PC-9 (cell line): ENCODE measurements at regions of chr14 and their contacts with region 1.

Region 1: GRCh38 chr14:93231129-93231979 is 24.3 kb downstream of the UBR7 start:
- DNase-seq: no peak
- H3K4me3 ChIP-seq: no peak overlapping the region
- H3K27ac ChIP-seq: no peak overlapping the region
- H3K4me1 ChIP-seq: no peaks in the 10 kb centered on the region
- H3K27me3 ChIP-seq: no peaks in the 10 kb centered on the region
- CTCF ChIP-seq: no peak

Region 2: GRCh38 chr14:92748259-92749016 is 482.9 kb before region 1 on chr14 and contains the start of gene LGMN:
- CTCF ChIA-PET with region 1: no interaction called
- POLR2A ChIA-PET with region 1: interaction called, 19 read pairs
- intact Hi-C with region 1: no loop called
- DNase-seq: peak; percentile 88
- H3K4me3 ChIP-seq: peak within 1 kb of the TSS; percentile 87
- H3K27ac ChIP-seq: peak within 1 kb of the TSS; percentile 11; the same call in 1 of the 2 replicates
- H3K4me1 ChIP-seq: peaks cover 13% of the 10 kb centered on the region
- H3K27me3 ChIP-seq: no peaks in the 10 kb centered on the region
- CTCF ChIP-seq: no peak
- total RNA-seq, gene LGMN: 48.8 and 50.8 TPM in 2 replicates

Region 3: DNA sequence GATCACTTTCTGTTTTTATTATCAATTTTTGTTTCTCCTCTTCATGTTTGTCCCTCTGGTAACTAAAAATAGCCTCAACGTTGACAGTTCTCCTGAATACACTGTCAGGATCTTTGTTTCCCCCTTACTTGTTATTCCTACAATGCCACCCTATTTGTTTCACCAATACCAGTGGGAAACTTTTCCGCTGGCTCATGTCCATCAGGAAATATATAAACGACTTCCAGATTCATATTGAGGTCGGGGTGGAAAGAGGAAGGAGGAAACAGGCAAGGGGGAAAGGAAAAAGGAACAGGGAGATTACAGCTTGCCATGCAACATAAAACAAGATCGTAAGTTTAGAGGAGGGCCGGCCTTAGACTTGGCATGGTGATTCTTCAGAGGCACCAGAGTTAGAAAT is 39.8 kb after region 1 on chr14:
- CTCF ChIA-PET with region 1: no interaction called
- POLR2A ChIA-PET with region 1: no interaction called
- intact Hi-C with region 1: no loop called
- DNase-seq: no peak
- H3K4me3 ChIP-seq: no peak overlapping the region
- H3K27ac ChIP-seq: no peak overlapping the region
- H3K4me1 ChIP-seq: no peaks in the 10 kb centered on the region
- H3K27me3 ChIP-seq: no peaks in the 10 kb centered on the region
- CTCF ChIP-seq: no peak